ENCODE measurements at regions of chr2 and their contacts with region 1.

Region 1: GRCh38 chr2:165874445-165875039 is 79.0 kb downstream of the TTC21B start:
- DNase-seq: peak; percentile 34
- H3K4me3 ChIP-seq: no peak overlapping the region
- CTCF ChIP-seq: peak; percentile 55

Region 2: GRCh38 chr2:165401285-165401852 is 473.2 kb before region 1 on chr2:
- CTCF ChIA-PET with region 1: interaction called, 91 read pairs
- POLR2A ChIA-PET with region 1: no interaction called
- DNase-seq: peak; percentile 29
- H3K4me3 ChIP-seq: no peak overlapping the region
- CTCF ChIP-seq: peak; percentile 56

Region 3: DNA sequence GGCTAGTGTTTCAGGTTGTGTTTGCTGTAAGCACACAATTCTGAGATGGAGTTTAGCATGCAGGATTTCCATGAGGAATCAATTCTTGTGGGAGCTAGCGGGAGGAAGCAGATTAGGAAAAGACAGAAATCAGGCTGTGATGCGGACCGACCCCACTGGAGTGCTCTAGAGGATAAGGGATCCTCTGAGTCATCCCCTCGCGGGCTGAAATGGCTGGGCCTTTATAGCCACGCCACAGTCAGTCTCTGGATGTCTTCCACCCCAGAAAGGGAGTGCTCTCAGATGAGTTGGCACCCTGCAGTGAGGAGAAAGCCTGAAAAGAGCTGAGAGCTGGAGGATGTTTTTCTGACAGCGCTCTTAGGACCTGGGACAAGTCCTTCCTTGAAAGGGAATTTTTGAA is 182.9 kb before region 1 on chr2:
- CTCF ChIA-PET with region 1: interaction called, 17 read pairs
- POLR2A ChIA-PET with region 1: no interaction called
- DNase-seq: no peak
- H3K4me3 ChIP-seq: no peak overlapping the region
- CTCF ChIP-seq: no peak

Region 4: DNA sequence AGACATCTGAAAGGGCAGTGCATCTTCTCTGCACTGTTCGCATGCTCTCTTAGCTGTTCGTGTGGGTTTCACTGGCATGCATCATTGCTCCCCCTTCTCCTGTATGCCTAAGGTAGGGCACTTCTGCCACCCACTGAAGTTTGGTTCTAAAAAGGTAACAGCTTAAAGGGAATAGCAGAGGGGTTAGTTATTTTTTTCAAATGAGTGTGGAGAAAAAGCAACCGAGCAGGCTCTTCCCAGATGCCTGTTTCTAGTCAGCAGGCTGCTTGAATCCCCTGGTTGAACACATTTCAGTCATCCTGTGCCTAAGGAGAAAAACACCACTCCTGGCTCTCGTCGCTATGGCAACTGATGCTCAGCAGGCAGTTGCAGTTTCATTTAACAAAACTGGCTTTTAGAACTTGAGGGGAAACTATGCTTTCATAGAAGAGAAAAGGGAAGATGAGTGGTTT is 10.7 kb before region 1 on chr2:
- CTCF ChIA-PET with region 1: interaction called, 10 read pairs
- POLR2A ChIA-PET with region 1: interaction called, 3 read pairs
- DNase-seq: no peak
- H3K4me3 ChIP-seq: no peak overlapping the region
- CTCF ChIP-seq: no peak

Region 5: GRCh38 chr2:165889158-165889557 is 14.6 kb after region 1 on chr2:
- CTCF ChIA-PET with region 1: interaction called, 14 read pairs
- POLR2A ChIA-PET with region 1: no interaction called
- DNase-seq: no peak
- H3K4me3 ChIP-seq: no peak overlapping the region
- CTCF ChIP-seq: no peak